Activated CD8-positive, alpha-beta memory T cell treated with anti-CD3 and anti-CD28 coated beads, Interleukin-2, amount 10 ng/mL, durations not matched to agents 7 days and 5 days (primary cell): ENCODE measurements at regions of chr14 and their contacts with region 1.

Region 1: GRCh38 chr14:66496911-66497310 is 10.7 kb downstream of the CCDC196 start:
- DNase-seq: no peak
- ATAC-seq: no peak
- H3K4me3 Mint-ChIP-seq: no peak overlapping the region
- H3K27ac Mint-ChIP-seq: no peak overlapping the region
- H3K4me1 Mint-ChIP-seq: peaks cover 12% of the 10 kb centered on the region
- H3K27me3 Mint-ChIP-seq: peaks cover 20% of the 10 kb centered on the region

Region 2: DNA sequence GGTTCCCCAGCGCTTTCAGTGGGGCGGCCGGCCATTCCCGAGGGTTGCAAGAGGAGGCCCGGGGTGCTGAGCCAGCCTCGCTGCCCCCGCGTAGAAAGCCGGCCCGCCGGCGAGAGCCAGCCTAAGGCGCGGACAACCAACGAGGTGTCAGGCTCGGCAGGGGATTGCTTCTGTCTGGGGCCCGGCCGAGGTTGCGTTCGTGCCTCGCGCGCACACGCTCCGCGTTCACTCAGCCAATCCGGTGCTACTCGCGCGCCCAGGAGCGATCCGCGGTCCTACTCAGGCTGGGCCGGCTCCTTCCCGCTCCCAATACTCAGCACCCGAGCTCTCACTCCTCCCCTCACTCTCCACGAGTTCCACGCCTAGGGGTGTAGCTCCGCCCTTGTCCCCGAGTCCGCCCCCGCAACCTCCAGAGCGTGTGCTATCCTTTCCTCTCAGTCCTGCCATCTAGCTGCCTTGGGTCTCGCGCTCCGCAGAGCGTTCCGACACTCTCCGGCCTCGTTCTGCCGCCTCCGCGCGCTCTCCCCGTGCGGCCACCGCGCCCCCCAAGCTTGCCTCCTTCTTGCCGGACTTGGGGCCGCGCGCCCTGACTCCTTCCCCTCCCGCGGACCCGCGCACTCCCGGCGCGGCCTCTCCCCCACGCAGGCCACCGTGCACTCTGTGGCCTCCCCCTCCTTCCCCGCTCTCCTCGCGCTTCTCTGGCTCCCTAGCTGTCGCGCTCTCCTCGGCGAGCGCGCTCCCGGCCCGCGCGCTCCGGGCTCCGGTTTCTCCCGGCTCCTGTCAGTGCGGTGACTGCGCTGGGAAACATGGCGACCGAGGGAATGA is 11.0 kb after region 1 on chr14 and contains the start of gene GPHN:
- CTCF ChIA-PET with region 1: interaction called, 12 read pairs
- DNase-seq: peak; percentile 91
- ATAC-seq: peak; percentile 94
- H3K4me3 Mint-ChIP-seq: peak within 1 kb of the TSS; percentile 84
- H3K27ac Mint-ChIP-seq: peak within 1 kb of the TSS; percentile 75
- H3K4me1 Mint-ChIP-seq: peaks cover 31% of the 10 kb centered on the region
- H3K27me3 Mint-ChIP-seq: peaks cover 53% of the 10 kb centered on the region
- total RNA-seq, gene GPHN: 11.9 to 22.5 TPM